Right cardiac atrium (tissue), 5 donors: ENCODE measurements at regions of chr13 and their contacts with region 1.

Region 1: GRCh38 chr13:23020223-23020843 is 160.4 kb upstream of the SGCG start:
- DNase-seq: peak in 1 of 3 donors; percentile 44
- ATAC-seq: peak; percentile 67 to 71
- H3K4me3 ChIP-seq: no peak overlapping the region
- H3K27ac ChIP-seq: no peak overlapping the region
- H3K4me1 ChIP-seq: no peaks in the 10 kb centered on the region
- H3K27me3 ChIP-seq: no peaks in the 10 kb centered on the region

Region 2: DNA sequence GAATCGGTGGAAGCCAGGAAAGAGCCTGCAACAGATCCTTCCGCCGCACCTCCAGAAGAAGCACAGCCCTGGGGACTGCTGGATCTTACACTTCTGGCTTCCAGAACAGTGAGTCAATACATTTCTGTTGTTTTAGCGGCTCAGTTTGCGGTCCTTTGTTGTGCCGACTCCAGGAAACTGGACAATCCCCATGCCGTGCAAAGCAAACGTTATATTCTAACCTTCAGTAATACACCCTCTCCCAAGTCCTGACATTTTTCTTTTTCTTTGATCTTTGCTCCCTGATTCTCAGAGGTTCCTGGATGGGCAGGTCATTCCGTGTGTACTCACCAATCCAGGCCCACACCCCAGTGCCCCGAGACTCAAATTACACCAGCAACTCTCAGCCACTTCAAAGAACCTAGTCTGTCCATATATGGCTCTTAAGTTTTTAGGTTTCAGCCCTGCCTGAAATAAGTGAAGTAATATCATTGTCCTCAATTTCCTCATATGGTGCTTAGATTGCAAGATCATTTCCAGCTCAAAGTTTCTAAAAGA is 226.7 kb before region 1 on chr13:
- intact Hi-C with region 1: loop called in 1 of 4 experiments (anchors 10 kb)
- DNase-seq: no peak
- ATAC-seq: no peak
- H3K4me3 ChIP-seq: no peak overlapping the region
- H3K27ac ChIP-seq: no peak overlapping the region
- H3K4me1 ChIP-seq: no peaks in the 10 kb centered on the region
- H3K27me3 ChIP-seq: no peaks in the 10 kb centered on the region

Region 3: DNA sequence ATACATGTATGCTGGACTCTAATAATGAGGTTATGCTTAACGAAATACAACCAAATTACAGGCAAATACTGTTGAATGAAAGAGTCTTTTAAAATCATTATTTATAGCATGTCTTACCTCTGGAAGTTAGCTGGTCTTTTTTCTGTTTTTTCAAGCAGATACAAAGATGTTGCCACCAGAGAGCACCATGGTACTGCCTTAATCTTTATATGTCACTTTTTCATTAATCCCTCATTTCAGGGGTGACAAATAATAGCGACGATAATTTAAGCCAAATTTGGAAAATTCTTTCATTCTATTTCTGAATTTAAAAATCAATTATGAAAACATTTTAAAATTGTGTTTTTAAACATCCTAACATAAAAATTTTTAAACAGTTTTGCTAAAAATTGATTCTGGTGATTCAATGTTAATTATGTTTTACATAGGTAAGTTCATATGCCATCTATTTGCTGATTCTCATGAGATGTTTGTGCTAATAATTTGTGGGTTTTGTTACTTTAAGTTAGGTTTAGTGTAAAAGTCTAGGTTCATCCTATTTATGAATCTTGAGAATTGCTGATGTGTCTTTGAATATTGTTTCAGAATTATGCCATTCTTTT is 218.8 kb before region 1 on chr13:
- intact Hi-C with region 1: loop called in 3 of 4 experiments (anchors 5 to 10 kb)
- DNase-seq: no peak
- ATAC-seq: no peak
- H3K4me3 ChIP-seq: no peak overlapping the region
- H3K27ac ChIP-seq: no peak overlapping the region
- H3K4me1 ChIP-seq: no peaks in the 10 kb centered on the region
- H3K27me3 ChIP-seq: no peaks in the 10 kb centered on the region

Region 4: DNA sequence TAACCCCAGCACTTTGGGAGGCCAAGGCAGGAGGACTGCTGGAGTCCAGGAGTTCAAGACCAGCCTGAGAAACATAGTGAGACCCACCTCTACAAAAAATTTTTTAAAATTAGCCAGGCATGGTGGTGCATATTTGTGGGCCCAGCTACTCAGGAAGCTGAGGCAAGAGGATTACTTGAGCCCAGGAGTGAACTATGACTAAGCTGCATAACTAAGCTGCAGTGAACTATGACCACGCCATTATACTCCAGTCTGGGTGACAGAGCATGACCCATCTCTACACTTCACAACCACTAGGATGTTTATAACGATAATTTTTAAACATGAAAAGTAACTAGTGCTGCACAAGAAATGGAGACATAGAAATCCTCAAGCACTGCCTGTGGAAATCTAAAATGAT is 192.3 kb before region 1 on chr13:
- intact Hi-C with region 1: loop called in 1 of 4 experiments (anchors 10 kb)
- DNase-seq: no peak
- ATAC-seq: no peak
- H3K4me3 ChIP-seq: no peak overlapping the region
- H3K27ac ChIP-seq: no peak overlapping the region
- H3K4me1 ChIP-seq: no peaks in the 10 kb centered on the region
- H3K27me3 ChIP-seq: no peaks in the 10 kb centered on the region